Activated CD4-positive, alpha-beta T cell treated with anti-CD3 and anti-CD28 coated beads for 36 hours (primary cell): ENCODE measurements at regions of chr17 and their contacts with region 1.

Region 1: GRCh38 chr17:59619293-59620063 is at the start of gene CLTC:
- DNase-seq: peak; percentile 97
- ATAC-seq: peak; percentile 85
- H3K4me3 Mint-ChIP-seq: peak within 1 kb of the TSS; percentile 89
- H3K27ac Mint-ChIP-seq: peak within 1 kb of the TSS; percentile 98
- H3K4me1 Mint-ChIP-seq: peaks cover 49% of the 10 kb centered on the region
- H3K27me3 Mint-ChIP-seq: no peaks in the 10 kb centered on the region
- total RNA-seq, gene CLTC: 180 to 186 TPM

Region 2: GRCh38 chr17:59106463-59107305 is 512.8 kb before region 1 on chr17 and contains the start of gene TRIM37:
- CTCF ChIA-PET with region 1: no interaction called
- POLR2A ChIA-PET with region 1: interaction called, 7 read pairs
- intact Hi-C with region 1: loop called in 1 of 2 experiments (anchors 1 kb)
- DNase-seq: peak; percentile 99
- ATAC-seq: peak; percentile 95
- H3K4me3 Mint-ChIP-seq: peak within 1 kb of the TSS; percentile 85
- H3K27ac Mint-ChIP-seq: peak within 1 kb of the TSS; percentile 92
- H3K4me1 Mint-ChIP-seq: peaks cover 49% of the 10 kb centered on the region
- H3K27me3 Mint-ChIP-seq: no peaks in the 10 kb centered on the region
- total RNA-seq, gene TRIM37: 21.3 to 22.7 TPM

Region 3: DNA sequence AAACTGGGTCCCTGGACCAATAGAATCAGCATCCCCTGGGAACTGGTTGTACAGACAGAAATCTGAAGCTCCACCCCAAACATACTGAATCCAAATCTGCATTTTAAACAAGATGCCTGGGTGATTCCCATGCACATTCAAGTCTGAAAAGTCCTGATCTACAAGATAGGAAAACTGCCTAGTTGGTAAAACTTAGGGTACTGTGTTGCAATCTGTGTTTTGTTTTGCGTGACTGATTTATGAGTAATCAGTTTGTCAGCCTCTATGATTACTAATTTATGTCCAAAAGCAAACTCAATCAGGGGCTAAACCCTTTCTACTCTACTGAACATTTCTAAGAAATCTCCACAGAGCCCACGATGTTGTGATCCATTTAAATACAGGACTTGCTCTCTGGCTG is 184.2 kb before region 1 on chr17:
- CTCF ChIA-PET with region 1: no interaction called
- POLR2A ChIA-PET with region 1: no interaction called
- intact Hi-C with region 1: loop called in 1 of 2 experiments (anchors 1 kb)
- DNase-seq: no peak
- ATAC-seq: peak; percentile 89
- H3K4me3 Mint-ChIP-seq: peak overlapping the region; percentile 47
- H3K27ac Mint-ChIP-seq: peak overlapping the region; percentile 87
- H3K4me1 Mint-ChIP-seq: peaks cover 63% of the 10 kb centered on the region
- H3K27me3 Mint-ChIP-seq: peaks cover 7% of the 10 kb centered on the region

Region 4: GRCh38 chr17:59466946-59467801 is 152.3 kb before region 1 on chr17:
- CTCF ChIA-PET with region 1: no interaction called
- POLR2A ChIA-PET with region 1: no interaction called
- intact Hi-C with region 1: no loop called
- DNase-seq: no peak
- ATAC-seq: no peak
- H3K4me3 Mint-ChIP-seq: no peak overlapping the region
- H3K27ac Mint-ChIP-seq: no peak overlapping the region
- H3K4me1 Mint-ChIP-seq: peaks cover 4% of the 10 kb centered on the region
- H3K27me3 Mint-ChIP-seq: peaks cover 2% of the 10 kb centered on the region

Region 5: GRCh38 chr17:59601130-59601529 is 18.3 kb before region 1 on chr17:
- CTCF ChIA-PET with region 1: interaction called, 3 read pairs
- POLR2A ChIA-PET with region 1: interaction called, 3 read pairs
- intact Hi-C with region 1: loop called in 1 of 2 experiments (anchors 1 kb)
- DNase-seq: peak; percentile 43
- ATAC-seq: peak; percentile 99
- H3K4me3 Mint-ChIP-seq: no peak overlapping the region
- H3K27ac Mint-ChIP-seq: peak overlapping the region; percentile 34
- H3K4me1 Mint-ChIP-seq: peaks cover 11% of the 10 kb centered on the region
- H3K27me3 Mint-ChIP-seq: no peaks in the 10 kb centered on the region

Region 6: GRCh38 chr17:59786536-59787319 is 167.2 kb after region 1 on chr17:
- CTCF ChIA-PET with region 1: no interaction called
- POLR2A ChIA-PET with region 1: interaction called, 4 read pairs
- intact Hi-C with region 1: loop called in 1 of 2 experiments (anchors 1 kb)
- DNase-seq: peak; percentile 86
- ATAC-seq: peak; percentile 84
- H3K4me3 Mint-ChIP-seq: peak overlapping the region; percentile 71
- H3K27ac Mint-ChIP-seq: peak overlapping the region; percentile 96
- H3K4me1 Mint-ChIP-seq: peaks cover 68% of the 10 kb centered on the region
- H3K27me3 Mint-ChIP-seq: no peaks in the 10 kb centered on the region

Region 7: DNA sequence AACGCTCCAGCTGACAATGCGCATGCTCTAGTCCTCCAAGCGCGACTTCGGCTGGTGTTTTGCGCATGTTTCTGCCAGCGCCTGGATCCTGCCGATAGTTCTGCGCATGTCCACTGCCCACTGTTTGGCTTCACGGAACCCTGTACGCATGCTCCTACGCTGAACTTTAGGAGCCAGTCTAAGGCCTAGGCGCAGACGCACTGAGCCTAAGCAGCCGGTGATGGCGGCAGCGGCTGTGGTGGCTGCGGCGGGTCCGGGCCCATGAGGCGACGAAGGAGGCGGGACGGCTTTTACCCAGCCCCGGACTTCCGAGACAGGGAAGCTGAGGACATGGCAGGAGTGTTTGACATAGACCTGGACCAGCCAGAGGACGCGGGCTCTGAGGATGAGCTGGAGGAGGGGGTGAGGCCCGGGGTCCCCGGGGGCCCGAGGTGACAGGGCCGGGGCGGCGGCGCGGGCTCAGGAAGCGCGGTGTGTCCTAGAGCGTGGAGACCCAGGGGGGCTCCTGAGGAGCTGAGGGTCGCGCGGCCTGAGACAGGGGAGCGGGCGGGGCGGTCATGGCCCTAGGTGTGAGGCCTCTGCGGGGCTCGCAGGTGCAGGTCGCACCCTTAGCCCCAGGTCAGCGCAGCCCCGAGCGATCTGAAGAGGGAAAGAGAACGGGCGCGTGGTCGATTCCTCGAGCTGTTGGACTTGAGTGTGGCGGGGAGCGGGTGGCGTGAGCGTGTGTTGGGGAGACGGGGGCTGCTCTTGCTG is 273.6 kb after region 1 on chr17 and contains the starts of genes RPS6KB1 and TUBD1:
- CTCF ChIA-PET with region 1: interaction called, 3 read pairs
- POLR2A ChIA-PET with region 1: no interaction called
- intact Hi-C with region 1: loop called (anchors 2 kb)
- DNase-seq: peak; percentile 98
- ATAC-seq: peak; percentile 97
- H3K4me3 Mint-ChIP-seq: peak within 1 kb of the TSS; percentile 99
- H3K27ac Mint-ChIP-seq: peak within 1 kb of the TSS; percentile 97
- H3K4me1 Mint-ChIP-seq: peaks cover 45% of the 10 kb centered on the region
- H3K27me3 Mint-ChIP-seq: no peaks in the 10 kb centered on the region
- total RNA-seq, gene RPS6KB1: 52.6 to 54.5 TPM
- total RNA-seq, gene TUBD1: 10.6 to 11.0 TPM